ACHN (cell line): ENCODE measurements at regions of chr3 and their contacts with region 1.

Region 1: GRCh38 chr3:149726716-149727407 is 25.4 kb downstream of the COMMD2 start:
- DNase-seq: no peak

Region 2: DNA sequence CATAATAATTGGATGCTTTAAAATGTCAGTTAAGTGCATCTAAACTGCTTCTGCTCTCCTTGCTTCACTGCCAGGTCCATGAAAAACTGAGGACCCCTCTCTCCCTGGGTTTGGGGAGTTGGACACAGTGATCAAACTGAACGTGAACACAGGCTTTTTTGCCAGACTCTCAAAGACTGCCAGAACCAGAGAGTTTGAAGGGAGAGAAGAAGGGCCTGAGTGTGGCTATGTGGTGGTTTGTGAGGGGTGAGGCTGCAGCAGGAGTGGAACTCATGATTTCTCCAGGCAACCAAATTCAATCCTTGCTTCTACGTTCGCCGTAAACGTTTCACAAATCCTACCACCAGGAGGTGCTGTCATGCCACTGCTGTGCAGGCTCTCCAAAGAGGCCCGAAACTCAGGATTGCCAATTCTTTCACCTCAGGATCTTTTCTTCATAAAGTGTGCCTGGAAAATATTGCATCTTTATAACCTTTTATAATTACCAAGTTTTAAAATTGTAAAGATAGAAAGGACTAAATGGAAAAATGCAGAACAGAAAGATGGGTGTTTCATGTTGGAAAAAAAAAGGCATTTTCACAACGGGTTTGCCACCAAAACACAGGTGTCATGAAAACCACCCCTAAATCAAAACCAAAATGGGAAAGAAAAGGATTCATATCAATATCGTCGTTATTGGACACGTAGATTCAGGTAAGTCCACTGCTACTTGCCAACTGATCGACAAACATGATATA is 232.7 kb before region 1 on chr3:
- in situ Hi-C with region 1: no loop called
- DNase-seq: peak; percentile 35

Region 3: DNA sequence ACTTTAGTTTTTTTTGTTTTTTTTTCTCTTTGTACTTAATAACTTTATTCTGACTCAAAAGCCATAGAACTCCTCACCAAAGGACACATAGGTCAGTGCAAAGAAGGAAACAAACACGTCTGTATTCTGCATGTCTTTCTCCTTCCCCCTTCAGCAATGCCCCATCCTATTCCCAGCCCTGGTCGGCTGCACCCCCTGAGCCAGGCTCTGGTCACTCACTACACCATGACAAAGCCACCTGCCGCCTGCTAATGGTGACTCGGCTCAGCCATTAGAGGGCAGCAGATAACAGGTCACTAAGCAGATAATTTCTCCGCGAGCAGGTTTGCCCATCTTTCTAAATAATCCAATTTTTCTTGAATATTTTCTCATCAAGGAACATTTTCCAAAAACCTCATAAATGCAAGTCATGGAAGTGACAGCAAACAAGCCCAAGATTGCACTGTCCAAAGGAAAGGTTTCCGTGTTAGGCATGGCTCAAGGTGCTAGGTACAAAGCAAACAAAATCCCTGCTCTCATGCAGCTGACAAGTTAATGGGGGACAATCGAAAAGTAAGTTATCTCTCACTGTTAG is 214.6 kb before region 1 on chr3:
- in situ Hi-C with region 1: loop called (anchors 25 kb)
- DNase-seq: peak; percentile 66